ENCODE measurements at regions of chr5 and their contacts with region 1.

Region 1: DNA sequence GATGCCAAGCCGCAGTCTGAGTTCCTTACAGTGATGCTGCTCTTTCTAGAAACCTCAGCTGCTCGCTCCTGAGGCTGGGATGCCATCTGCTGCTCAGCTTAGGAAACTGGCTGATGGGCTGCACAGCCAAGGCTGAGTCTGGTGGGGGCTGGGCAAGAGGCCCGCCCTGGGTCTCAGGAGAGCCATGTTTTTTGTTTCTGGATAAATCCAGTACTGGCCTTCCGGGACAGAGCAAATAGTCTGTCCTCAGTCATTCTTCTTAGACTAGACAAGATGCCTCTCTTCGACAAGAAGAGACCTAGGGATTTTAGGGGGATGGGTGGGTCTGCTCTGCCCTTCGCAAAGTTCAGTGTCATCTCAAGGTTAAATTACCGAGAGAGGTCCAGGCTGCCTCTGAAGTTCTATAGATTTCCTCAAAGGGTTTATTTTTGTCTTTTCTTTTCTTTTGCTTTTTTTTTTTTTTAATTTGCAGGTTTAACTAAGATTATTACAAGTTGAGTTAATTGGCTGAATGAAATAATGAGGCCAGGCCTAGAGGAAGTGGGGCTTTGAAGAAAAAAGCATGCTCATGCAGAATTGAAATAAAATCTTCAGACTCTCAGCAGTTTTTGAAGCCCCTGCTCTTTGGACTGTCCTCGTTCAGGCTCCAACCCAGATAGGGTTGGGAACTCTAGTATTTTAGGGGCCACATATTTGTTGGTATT is 30.6 kb upstream of the MATR3 start:
- DNase-seq: peak; percentile 90 to 95 (median 95)
- ATAC-seq: peak; percentile 99
- H3K4me3 ChIP-seq: no peak overlapping the region
- H3K27ac ChIP-seq: no peak overlapping the region
- H3K4me1 ChIP-seq: peaks cover 1% of the 10 kb centered on the region
- H3K27me3 ChIP-seq: no peaks in the 10 kb centered on the region

Region 2: GRCh38 chr5:138583984-138584637 is 678.8 kb before region 1 on chr5:
- intact Hi-C with region 1: loop called in 2 of 4 experiments (anchors 10 kb)
- DNase-seq: no peak
- ATAC-seq: no peak
- H3K4me3 ChIP-seq: no peak overlapping the region
- H3K27ac ChIP-seq: no peak overlapping the region
- H3K4me1 ChIP-seq: no peaks in the 10 kb centered on the region
- H3K27me3 ChIP-seq: no peaks in the 10 kb centered on the region

Region 3: GRCh38 chr5:138632900-138633489 is 629.9 kb before region 1 on chr5:
- intact Hi-C with region 1: loop called in 1 of 4 experiments (anchors 5 kb)
- DNase-seq: peak; percentile 76 to 85 (median 80)
- ATAC-seq: peak; percentile 81 to 89
- H3K4me3 ChIP-seq: no peak overlapping the region
- H3K27ac ChIP-seq: no peak overlapping the region
- H3K4me1 ChIP-seq: no peaks in the 10 kb centered on the region
- H3K27me3 ChIP-seq: no peaks in the 10 kb centered on the region

Region 4: GRCh38 chr5:138641547-138642298 is 621.2 kb before region 1 on chr5:
- intact Hi-C with region 1: loop called in 1 of 4 experiments (anchors 5 kb)
- DNase-seq: peak; percentile 74 to 88 (median 85)
- ATAC-seq: peak; percentile 61 to 72
- H3K4me3 ChIP-seq: no peak overlapping the region
- H3K27ac ChIP-seq: no peak overlapping the region
- H3K4me1 ChIP-seq: no peaks in the 10 kb centered on the region
- H3K27me3 ChIP-seq: no peaks in the 10 kb centered on the region

Region 5: GRCh38 chr5:139091439-139092156 is 171.3 kb before region 1 on chr5:
- intact Hi-C with region 1: loop called in 3 of 4 experiments (anchors 2 to 10 kb)
- DNase-seq: no peak
- ATAC-seq: peak; percentile 84 to 93
- H3K4me3 ChIP-seq: no peak overlapping the region
- H3K27ac ChIP-seq: no peak overlapping the region
- H3K4me1 ChIP-seq: no peaks in the 10 kb centered on the region
- H3K27me3 ChIP-seq: no peaks in the 10 kb centered on the region

Region 6: GRCh38 chr5:139363937-139364336 is 101.0 kb after region 1 on chr5:
- intact Hi-C with region 1: no loop called
- DNase-seq: no peak
- ATAC-seq: peak in 1 of 2 donors; percentile 58
- H3K4me3 ChIP-seq: no peak overlapping the region
- H3K27ac ChIP-seq: no peak overlapping the region
- H3K4me1 ChIP-seq: no peaks in the 10 kb centered on the region
- H3K27me3 ChIP-seq: no peaks in the 10 kb centered on the region